Activated B cell treated with CpG ODN at 0.5 μM for 24 hours (primary cell): ENCODE measurements at regions of chr6 and their contacts with region 1.

Region 1: DNA sequence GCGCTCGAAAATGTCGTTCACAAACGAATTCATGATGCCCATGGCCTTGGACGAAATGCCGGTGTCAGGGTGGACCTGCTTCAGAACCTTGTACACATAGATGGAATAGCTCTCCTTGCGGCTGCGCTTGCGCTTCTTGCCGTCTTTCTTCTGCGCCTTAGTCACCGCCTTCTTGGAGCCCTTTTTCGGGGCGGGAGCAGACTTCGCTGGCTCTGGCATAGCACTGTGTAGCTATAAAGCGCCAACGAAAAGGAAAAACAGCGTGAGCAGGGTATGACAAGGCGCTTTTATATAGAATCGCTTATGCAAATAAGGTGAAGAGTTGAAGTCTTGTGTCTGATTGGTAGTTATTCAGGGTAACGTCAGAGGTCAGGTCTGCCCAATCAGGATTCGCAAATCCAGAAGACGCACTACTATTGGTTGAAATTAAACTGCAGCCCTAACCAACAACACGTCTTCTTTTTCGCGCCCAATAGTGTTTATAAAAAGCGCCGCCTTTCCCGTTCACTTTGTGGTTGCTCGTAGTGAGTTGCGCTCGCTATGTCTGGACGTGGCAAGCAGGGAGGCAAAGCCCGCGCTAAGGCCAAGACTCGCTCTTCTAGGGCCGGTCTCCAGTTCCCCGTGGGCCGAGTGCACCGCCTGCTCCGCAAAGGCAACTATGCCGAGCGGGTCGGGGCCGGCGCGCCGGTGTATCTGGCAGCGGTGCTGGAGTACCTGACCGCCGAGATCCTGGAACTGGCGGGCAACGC is 114.8 kb upstream of the PRSS16 start:
- DNase-seq: peak; percentile 77
- ATAC-seq: peak; percentile 84
- H3K4me3 Mint-ChIP-seq: no peak overlapping the region
- H3K27ac Mint-ChIP-seq: no peak overlapping the region
- H3K4me1 Mint-ChIP-seq: peaks cover 14% of the 10 kb centered on the region
- H3K27me3 Mint-ChIP-seq: no peaks in the 10 kb centered on the region
- CTCF ChIP-seq: no peak

Region 2: GRCh38 chr6:26045065-26045927 is 1087.4 kb before region 1 on chr6:
- CTCF ChIA-PET with region 1: no interaction called
- POLR2A ChIA-PET with region 1: interaction called, 24 read pairs
- intact Hi-C with region 1: no loop called
- DNase-seq: peak; percentile 51
- ATAC-seq: peak; percentile 58
- H3K4me3 Mint-ChIP-seq: peak overlapping the region; percentile 91
- H3K27ac Mint-ChIP-seq: peak overlapping the region; percentile 99
- H3K4me1 Mint-ChIP-seq: peaks cover 24% of the 10 kb centered on the region
- H3K27me3 Mint-ChIP-seq: no peaks in the 10 kb centered on the region
- CTCF ChIP-seq: no peak

Region 3: DNA sequence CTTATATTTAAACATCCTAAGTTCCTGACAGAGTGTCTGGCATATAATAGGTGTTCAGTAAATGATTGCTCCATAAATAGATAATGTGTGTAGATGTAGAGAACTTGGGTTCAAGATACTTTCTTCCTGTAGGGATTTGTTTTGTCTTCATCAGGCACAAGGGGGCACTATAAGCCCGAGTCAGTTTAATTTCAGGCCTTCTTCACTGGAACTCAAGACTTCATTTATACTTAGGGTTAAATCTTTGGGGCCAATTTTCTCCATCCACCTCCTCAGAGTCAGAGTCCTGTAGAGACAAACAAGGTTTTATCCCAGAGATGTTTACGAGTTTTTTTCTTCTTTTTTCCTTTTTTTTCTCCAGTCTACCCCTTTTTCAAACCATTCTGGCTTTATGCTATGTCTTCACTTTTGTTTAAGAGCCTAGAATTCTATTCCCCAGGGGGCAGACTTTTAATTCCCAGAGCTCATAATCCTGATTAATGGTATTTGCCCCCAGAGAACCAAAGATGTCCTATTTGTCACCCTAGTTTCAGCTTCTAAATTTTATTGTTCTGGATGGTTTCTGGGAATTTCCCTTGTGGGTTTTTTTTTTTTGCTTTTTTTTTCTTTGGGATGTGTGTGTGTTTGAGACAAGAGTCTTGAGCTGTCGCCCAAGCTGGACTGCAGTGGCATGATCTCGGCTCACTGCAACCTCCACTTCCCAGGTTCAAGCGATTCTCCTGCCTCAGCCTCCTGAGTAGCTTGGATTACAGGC is 957.1 kb before region 1 on chr6:
- CTCF ChIA-PET with region 1: no interaction called
- POLR2A ChIA-PET with region 1: interaction called, 5 read pairs
- intact Hi-C with region 1: loop called (anchors 5 kb)
- DNase-seq: no peak
- ATAC-seq: no peak
- H3K4me3 Mint-ChIP-seq: no peak overlapping the region
- H3K27ac Mint-ChIP-seq: peak overlapping the region; percentile 65
- H3K4me1 Mint-ChIP-seq: peaks cover 38% of the 10 kb centered on the region
- H3K27me3 Mint-ChIP-seq: no peaks in the 10 kb centered on the region
- CTCF ChIP-seq: no peak

Region 4: DNA sequence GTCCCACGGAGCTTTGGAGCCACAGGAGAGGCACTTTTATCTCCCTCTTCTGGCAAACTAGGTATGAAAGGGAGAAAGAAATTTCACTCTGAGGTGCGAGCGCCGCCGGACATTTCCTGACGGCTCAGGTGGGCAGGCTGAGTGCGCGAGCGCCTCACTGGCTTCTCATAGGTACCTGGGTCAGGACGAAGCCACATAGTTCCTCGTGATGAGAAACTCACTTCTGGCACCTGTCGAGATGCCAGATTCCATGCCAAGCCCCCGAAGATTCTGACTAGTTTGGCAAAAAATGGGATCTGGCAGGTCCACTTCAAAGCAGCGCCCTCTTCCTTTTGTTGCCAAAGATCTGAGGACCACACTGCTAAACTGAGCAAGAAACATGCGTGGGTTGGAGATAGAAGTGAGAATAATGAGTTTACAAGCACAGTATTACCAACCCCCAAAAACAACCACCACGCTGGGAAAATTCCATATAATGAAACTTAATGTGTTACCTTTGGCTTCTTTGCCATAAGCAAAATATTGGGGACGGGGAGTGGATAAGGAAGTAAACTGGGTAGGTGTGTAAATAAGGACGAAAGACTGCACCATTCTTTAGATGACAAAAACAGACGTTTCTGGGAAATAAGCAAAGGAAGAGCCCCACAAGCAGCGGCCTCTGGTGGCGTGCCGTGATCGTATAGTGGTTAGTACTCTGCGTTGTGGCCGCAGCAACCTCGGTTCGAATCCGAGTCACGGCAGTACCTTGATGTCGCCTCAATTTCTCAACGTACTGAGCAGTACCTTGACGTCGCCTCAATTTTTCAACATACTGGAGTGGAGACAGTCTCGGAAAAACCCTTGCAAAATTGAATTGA is 25.0 kb after region 1 on chr6:
- CTCF ChIA-PET with region 1: interaction called, 20 read pairs
- POLR2A ChIA-PET with region 1: interaction called, 12 read pairs
- intact Hi-C with region 1: loop called (anchors 1 kb)
- DNase-seq: peak; percentile 60
- ATAC-seq: peak; percentile 80
- H3K4me3 Mint-ChIP-seq: peak overlapping the region; percentile 89
- H3K27ac Mint-ChIP-seq: peak overlapping the region; percentile 81
- H3K4me1 Mint-ChIP-seq: peaks cover 33% of the 10 kb centered on the region
- H3K27me3 Mint-ChIP-seq: no peaks in the 10 kb centered on the region
- CTCF ChIP-seq: no peak

Region 5: GRCh38 chr6:27809939-27810767 is 677.4 kb after region 1 on chr6:
- CTCF ChIA-PET with region 1: interaction called, 3 read pairs
- POLR2A ChIA-PET with region 1: interaction called, 51 read pairs
- intact Hi-C with region 1: loop called (anchors 1 kb)
- DNase-seq: peak; percentile 68
- ATAC-seq: peak; percentile 59
- H3K4me3 Mint-ChIP-seq: peak overlapping the region; percentile 93
- H3K27ac Mint-ChIP-seq: peak overlapping the region; percentile 97
- H3K4me1 Mint-ChIP-seq: peaks cover 59% of the 10 kb centered on the region
- H3K27me3 Mint-ChIP-seq: no peaks in the 10 kb centered on the region
- CTCF ChIP-seq: no peak

Region 6: GRCh38 chr6:28863604-28864320 is 1731.1 kb after region 1 on chr6:
- CTCF ChIA-PET with region 1: no interaction called
- POLR2A ChIA-PET with region 1: interaction called, 5 read pairs
- intact Hi-C with region 1: loop called (anchors 2 kb)
- DNase-seq: peak; percentile 54
- ATAC-seq: peak; percentile 30
- H3K4me3 Mint-ChIP-seq: peak overlapping the region; percentile 85
- H3K27ac Mint-ChIP-seq: peak overlapping the region; percentile 90
- H3K4me1 Mint-ChIP-seq: peaks cover 27% of the 10 kb centered on the region
- H3K27me3 Mint-ChIP-seq: peaks cover 4% of the 10 kb centered on the region
- CTCF ChIP-seq: no peak